Lower leg skin (tissue), 4 donors: ENCODE measurements at regions of chr17 and their contacts with region 1.

Region 1: GRCh38 chr17:82781894-82782274 is 30.0 kb downstream of the TBCD start:
- DNase-seq: peak; percentile 77 to 96
- H3K4me3 ChIP-seq: no peak overlapping the region
- CTCF ChIP-seq: peak in 1 of 3 donors; percentile 79
- POLR2A ChIP-seq: no peak

Region 2: GRCh38 chr17:82881900-82882714 is 100.2 kb after region 1 on chr17:
- intact Hi-C with region 1: loop called (anchors 10 kb)
- DNase-seq: peak; percentile 85 to 96
- H3K4me3 ChIP-seq: no peak overlapping the region
- CTCF ChIP-seq: no peak
- POLR2A ChIP-seq: no peak

Region 3: GRCh38 chr17:82917691-82918345 is 135.9 kb after region 1 on chr17:
- intact Hi-C with region 1: loop called (anchors 10 kb)
- DNase-seq: no peak
- H3K4me3 ChIP-seq: no peak overlapping the region
- CTCF ChIP-seq: no peak
- POLR2A ChIP-seq: no peak